Endothelial cell of umbilical vein (primary cell): ENCODE measurements at regions of chr17 and their contacts with region 1.

Region 1: GRCh38 chr17:44044067-44044466 is 22.4 kb downstream of the LSM12 start:
- DNase-seq: peak; percentile 11
- H3K4me3 ChIP-seq: no peak overlapping the region
- H3K27ac ChIP-seq: no peak overlapping the region
- H3K4me1 ChIP-seq: peaks cover 9% of the 10 kb centered on the region
- H3K27me3 ChIP-seq: no peaks in the 10 kb centered on the region
- CTCF ChIP-seq: no peak
- POLR2A ChIP-seq: no peak

Region 2: DNA sequence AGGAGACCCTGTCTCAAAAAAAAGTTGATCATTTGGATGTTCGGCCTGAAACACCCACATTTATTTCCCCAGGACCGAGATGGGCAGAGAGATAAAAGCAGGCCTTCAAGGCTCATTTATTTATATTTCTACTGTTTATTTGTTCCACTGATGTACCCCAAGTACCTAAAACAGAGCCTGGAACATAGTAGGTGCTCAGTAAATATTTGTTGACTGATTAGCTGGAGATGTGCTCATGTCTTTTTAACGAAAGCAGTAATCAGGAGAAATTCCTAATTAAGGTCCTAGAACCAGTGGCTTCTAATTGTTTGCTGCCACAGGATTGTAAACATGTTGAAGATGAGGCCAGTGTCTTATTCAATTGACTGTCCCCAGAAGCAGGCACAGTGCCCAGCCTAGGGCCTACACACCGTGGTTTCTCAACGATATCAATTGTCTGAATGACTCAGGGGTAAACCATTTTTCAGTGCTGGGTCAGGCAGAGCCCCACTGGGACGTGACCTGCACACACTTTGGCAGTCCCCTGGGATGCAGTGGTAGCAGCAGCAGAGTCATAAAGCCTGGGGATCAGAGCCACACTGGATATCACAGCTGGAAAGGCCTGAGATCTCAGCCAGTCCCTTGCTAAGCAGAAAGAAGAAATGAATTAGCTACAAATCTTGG is 320.2 kb before region 1 on chr17:
- CTCF ChIA-PET with region 1: no interaction called
- POLR2A ChIA-PET with region 1: no interaction called
- dilution Hi-C with region 1: no loop called
- intact Hi-C with region 1: no loop called
- DNase-seq: no peak
- H3K4me3 ChIP-seq: no peak overlapping the region
- H3K27ac ChIP-seq: no peak overlapping the region
- H3K4me1 ChIP-seq: peaks cover 6% of the 10 kb centered on the region
- H3K27me3 ChIP-seq: no peaks in the 10 kb centered on the region
- CTCF ChIP-seq: no peak
- POLR2A ChIP-seq: no peak

Region 3: DNA sequence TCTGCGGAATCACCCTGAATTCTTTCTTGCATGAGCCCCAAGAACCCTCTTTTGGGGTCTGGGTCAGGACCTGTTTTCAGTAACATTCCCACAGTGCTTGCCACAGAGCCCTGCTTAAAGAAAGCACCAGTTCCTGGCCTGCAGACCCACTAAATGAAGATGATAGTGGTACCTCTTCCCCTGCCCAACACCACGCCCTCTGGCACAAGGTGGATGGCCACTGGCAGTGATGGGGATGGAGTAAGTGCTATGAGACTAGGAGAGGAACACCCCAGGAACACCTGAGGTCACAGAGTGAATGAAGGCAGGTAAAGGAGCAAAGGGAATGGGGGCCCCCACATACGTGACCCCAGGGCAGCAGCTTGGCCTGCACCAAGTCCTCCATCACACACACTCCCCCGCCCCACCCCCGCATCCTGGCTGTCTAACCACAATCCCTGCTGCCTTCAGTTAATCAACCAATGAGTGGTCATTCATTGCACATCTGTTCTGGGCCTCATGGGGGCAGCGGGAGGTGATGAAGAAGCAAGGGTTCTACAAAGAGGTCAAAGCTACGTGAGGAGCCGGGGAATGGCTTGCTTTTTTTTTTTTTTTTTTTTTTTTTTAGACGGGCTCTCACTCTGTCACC is 97.9 kb before region 1 on chr17:
- CTCF ChIA-PET with region 1: interaction called, 108 read pairs
- POLR2A ChIA-PET with region 1: no interaction called
- dilution Hi-C with region 1: no loop called
- intact Hi-C with region 1: loop called (anchors 1 kb)
- DNase-seq: no peak
- H3K4me3 ChIP-seq: no peak overlapping the region
- H3K27ac ChIP-seq: no peak overlapping the region
- H3K4me1 ChIP-seq: no peaks in the 10 kb centered on the region
- H3K27me3 ChIP-seq: peaks cover 7 to 9% of the 10 kb centered on the region in 2 experiments
- CTCF ChIP-seq: no peak
- POLR2A ChIP-seq: no peak

Region 4: GRCh38 chr17:44006598-44007345 is 37.3 kb before region 1 on chr17:
- CTCF ChIA-PET with region 1: interaction called, 27 read pairs
- POLR2A ChIA-PET with region 1: no interaction called
- dilution Hi-C with region 1: no loop called
- intact Hi-C with region 1: loop called (anchors 1 kb)
- DNase-seq: peak; percentile 93
- H3K4me3 ChIP-seq: peak overlapping the region in 2 of 3 experiments; percentile 43 to 56
- H3K27ac ChIP-seq: no peak overlapping the region
- H3K4me1 ChIP-seq: peaks cover 36% of the 10 kb centered on the region
- H3K27me3 ChIP-seq: no peaks in the 10 kb centered on the region
- CTCF ChIP-seq: peak; percentile 57 to 76
- POLR2A ChIP-seq: no peak

Region 5: GRCh38 chr17:44024271-44024663 is 19.8 kb before region 1 on chr17:
- CTCF ChIA-PET with region 1: interaction called, 38 read pairs
- POLR2A ChIA-PET with region 1: no interaction called
- dilution Hi-C with region 1: no loop called
- intact Hi-C with region 1: no loop called
- DNase-seq: no peak
- H3K4me3 ChIP-seq: no peak overlapping the region
- H3K27ac ChIP-seq: no peak overlapping the region
- H3K4me1 ChIP-seq: no peaks in the 10 kb centered on the region
- H3K27me3 ChIP-seq: no peaks in the 10 kb centered on the region
- CTCF ChIP-seq: no peak
- POLR2A ChIP-seq: no peak

Region 6: DNA sequence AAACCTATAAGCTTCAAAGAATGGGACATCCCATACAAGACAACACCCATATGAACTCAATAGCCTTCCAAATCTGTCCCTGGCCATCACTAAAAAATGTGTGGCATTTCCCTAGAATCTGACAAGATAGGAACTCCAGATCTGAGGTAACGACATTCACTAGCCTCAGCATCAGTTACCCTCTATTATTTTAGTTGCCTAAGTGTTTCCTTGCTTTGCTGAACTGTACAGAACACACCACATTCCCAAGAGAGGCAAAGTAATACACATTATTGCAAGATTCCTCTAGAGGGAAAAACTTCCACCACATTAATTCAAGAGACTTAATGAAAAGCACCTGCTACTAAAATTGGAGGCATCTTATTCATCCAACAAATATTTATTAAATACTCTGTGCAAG is 17.4 kb after region 1 on chr17:
- CTCF ChIA-PET with region 1: interaction called, 12 read pairs
- POLR2A ChIA-PET with region 1: interaction called, 5 read pairs
- dilution Hi-C with region 1: no loop called
- intact Hi-C with region 1: no loop called
- DNase-seq: no peak
- H3K4me3 ChIP-seq: no peak overlapping the region
- H3K27ac ChIP-seq: no peak overlapping the region
- H3K4me1 ChIP-seq: peaks cover 13% of the 10 kb centered on the region
- H3K27me3 ChIP-seq: no peaks in the 10 kb centered on the region
- CTCF ChIP-seq: no peak
- POLR2A ChIP-seq: no peak

Region 7: GRCh38 chr17:44095642-44096496 is 51.8 kb after region 1 on chr17:
- CTCF ChIA-PET with region 1: interaction called, 4 read pairs
- POLR2A ChIA-PET with region 1: no interaction called
- dilution Hi-C with region 1: no loop called
- intact Hi-C with region 1: loop called (anchors 1 kb)
- DNase-seq: peak; percentile 97
- H3K4me3 ChIP-seq: peak overlapping the region in 2 of 3 experiments; percentile 10 to 19
- H3K27ac ChIP-seq: peak overlapping the region; percentile 83
- H3K4me1 ChIP-seq: peaks cover 23% of the 10 kb centered on the region
- H3K27me3 ChIP-seq: no peaks in the 10 kb centered on the region
- CTCF ChIP-seq: no peak
- POLR2A ChIP-seq: peak; percentile 92

Region 8: GRCh38 chr17:44123356-44124117 is 79.5 kb after region 1 on chr17 and contains the start of gene HDAC5:
- CTCF ChIA-PET with region 1: interaction called, 17 read pairs
- POLR2A ChIA-PET with region 1: interaction called, 6 read pairs
- dilution Hi-C with region 1: no loop called
- intact Hi-C with region 1: no loop called
- DNase-seq: peak; percentile 95
- H3K4me3 ChIP-seq: peak within 1 kb of the TSS; percentile 58 to 80 (median 78)
- H3K27ac ChIP-seq: peak within 1 kb of the TSS; percentile 51
- H3K4me1 ChIP-seq: peaks cover 7% of the 10 kb centered on the region
- H3K27me3 ChIP-seq: peaks cover 2 to 7% of the 10 kb centered on the region in 2 experiments
- CTCF ChIP-seq: peak; percentile 51 to 63
- POLR2A ChIP-seq: no peak
- total RNA-seq, gene HDAC5: 40.2 and 40.4 TPM in 2 replicates